ENCODE measurements at regions of chr6 and their contacts with region 1.

Region 1: GRCh38 chr6:52829046-52829817 is 11.4 kb downstream of the GSTA5 start:
- DNase-seq: no peak
- ATAC-seq: no peak
- H3K4me3 ChIP-seq: no peak overlapping the region
- H3K27ac ChIP-seq: no peak overlapping the region
- H3K4me1 ChIP-seq: no peaks in the 10 kb centered on the region
- H3K27me3 ChIP-seq: peaks cover 10% of the 10 kb centered on the region
- CTCF ChIP-seq: no peak
- POLR2A ChIP-seq: no peak
- RAD21 ChIP-seq: no peak

Region 2: GRCh38 chr6:52098634-52099185 is 730.5 kb before region 1 on chr6:
- CTCF ChIA-PET with region 1: no interaction called
- POLR2A ChIA-PET with region 1: no interaction called
- dilution Hi-C with region 1: no loop called
- in situ Hi-C with region 1: no loop called
- intact Hi-C with region 1: no loop called
- DNase-seq: no peak
- ATAC-seq: no peak
- H3K4me3 ChIP-seq: no peak overlapping the region
- H3K27ac ChIP-seq: no peak overlapping the region
- H3K4me1 ChIP-seq: no peaks in the 10 kb centered on the region
- H3K27me3 ChIP-seq: no peaks in the 10 kb centered on the region
- CTCF ChIP-seq: no peak
- POLR2A ChIP-seq: no peak
- RAD21 ChIP-seq: no peak

Region 3: DNA sequence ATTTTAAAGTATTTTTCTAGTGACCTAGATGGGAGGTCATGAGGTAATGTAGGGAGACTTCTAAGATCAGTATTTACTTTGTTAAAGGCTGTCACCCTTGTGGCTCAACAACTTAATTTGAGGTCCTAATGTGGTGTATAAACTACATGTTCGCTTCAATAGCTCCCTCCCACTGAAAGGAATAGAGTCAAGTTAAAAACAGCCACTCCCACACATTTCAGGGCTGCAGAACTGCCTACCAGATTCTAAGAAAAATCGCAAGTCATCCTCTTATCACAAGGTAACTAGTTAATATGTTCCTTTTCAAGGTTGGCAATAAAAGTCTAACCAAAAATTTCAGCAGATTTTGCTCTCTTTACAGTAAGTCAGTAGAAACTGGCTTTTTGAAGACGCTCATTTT is 40.8 kb before region 1 on chr6:
- CTCF ChIA-PET with region 1: no interaction called
- POLR2A ChIA-PET with region 1: no interaction called
- dilution Hi-C with region 1: no loop called
- in situ Hi-C with region 1: loop called (anchors 5 kb)
- intact Hi-C with region 1: loop called (anchors 1 kb)
- DNase-seq: peak; percentile 6
- ATAC-seq: no peak
- H3K4me3 ChIP-seq: no peak overlapping the region
- H3K27ac ChIP-seq: no peak overlapping the region
- H3K4me1 ChIP-seq: peaks cover 9% of the 10 kb centered on the region
- H3K27me3 ChIP-seq: no peaks in the 10 kb centered on the region
- CTCF ChIP-seq: no peak
- POLR2A ChIP-seq: no peak
- RAD21 ChIP-seq: no peak

Measured in IMR-90 (cell line).